Activated naive CD8-positive, alpha-beta T cell treated with anti-CD3 and anti-CD28 coated beads, Interleukin-2, amount 10 ng/mL, durations not matched to agents 7 days and 5 days (primary cell): ENCODE measurements at regions of chr5 and their contacts with region 1.

Region 1: DNA sequence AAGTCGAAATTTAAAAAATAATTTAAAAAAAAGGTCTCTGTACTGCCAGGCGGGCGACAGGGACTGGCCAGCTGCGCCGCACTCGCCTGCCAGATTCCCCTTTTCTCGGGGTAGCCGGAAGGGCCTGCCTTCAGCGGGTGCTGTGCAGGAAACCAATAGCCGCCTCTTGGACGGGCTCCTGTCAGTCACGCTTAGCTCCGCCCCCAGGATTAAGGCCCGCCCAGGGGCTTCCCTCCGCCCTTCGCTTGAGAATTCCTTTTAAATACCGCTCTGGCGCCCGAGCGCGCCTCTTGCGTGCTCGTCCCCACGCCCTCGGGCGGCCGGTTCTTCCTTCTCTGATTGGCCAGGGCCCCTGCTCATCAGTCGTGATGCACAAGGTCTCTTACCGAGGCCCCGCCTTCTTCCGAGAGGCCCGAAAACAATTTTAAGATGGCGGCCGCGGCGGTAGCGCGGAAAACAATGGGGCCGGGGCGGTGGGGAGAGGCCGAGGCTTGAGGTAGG is at the start of gene MAML1:
- DNase-seq: peak; percentile 98
- ATAC-seq: peak; percentile 97
- H3K4me3 Mint-ChIP-seq: peak within 1 kb of the TSS; percentile 95
- H3K27ac Mint-ChIP-seq: peak within 1 kb of the TSS; percentile 87
- H3K4me1 Mint-ChIP-seq: peaks cover 18% of the 10 kb centered on the region
- H3K27me3 Mint-ChIP-seq: no peaks in the 10 kb centered on the region
- total RNA-seq, gene MAML1: 38.5 TPM

Region 2: DNA sequence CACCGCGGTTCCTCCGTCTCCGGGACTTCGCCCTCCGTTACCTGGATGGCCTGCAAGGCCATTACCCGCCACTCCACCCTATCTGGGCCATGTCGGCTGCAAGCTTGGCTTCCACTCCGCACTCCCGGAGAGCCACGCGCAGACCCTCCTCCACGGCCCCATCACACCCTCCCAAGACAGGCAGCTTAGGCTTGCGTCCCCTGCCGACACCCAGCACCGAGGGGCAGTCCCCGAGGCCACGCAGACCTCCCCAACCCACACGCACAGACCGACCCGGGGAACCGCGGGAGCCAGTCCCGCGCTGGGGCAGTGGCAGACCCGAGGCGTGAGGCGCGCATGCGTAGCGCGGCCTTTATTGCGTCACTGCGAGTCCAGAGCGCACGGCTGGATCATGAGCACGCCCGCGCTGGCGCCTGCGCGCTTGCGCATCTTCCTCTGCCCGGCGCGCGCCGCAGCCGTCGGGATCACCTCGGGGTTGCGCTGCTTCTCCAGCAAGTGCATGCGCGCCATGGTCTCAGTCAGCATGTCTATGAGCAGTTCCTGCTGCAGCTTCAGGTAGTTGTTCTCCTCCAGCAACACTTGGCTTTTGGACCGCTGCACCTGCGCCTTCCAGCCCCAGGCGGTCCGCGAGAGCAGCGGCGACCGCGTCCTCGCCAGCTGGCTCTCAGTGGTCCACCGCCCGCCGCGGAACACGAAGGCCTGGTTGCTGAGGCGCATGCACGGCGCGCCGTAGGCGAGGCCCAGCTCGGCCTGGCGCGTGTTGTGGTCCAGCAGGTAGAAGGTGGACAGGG is 54.0 kb before region 1 on chr5:
- POLR2A ChIA-PET with region 1: interaction called, 23 read pairs
- DNase-seq: peak; percentile 95
- ATAC-seq: peak; percentile 93
- H3K4me3 Mint-ChIP-seq: peak overlapping the region; percentile 99
- H3K27ac Mint-ChIP-seq: peak overlapping the region; percentile 99
- H3K4me1 Mint-ChIP-seq: peaks cover 16% of the 10 kb centered on the region
- H3K27me3 Mint-ChIP-seq: no peaks in the 10 kb centered on the region

Region 3: DNA sequence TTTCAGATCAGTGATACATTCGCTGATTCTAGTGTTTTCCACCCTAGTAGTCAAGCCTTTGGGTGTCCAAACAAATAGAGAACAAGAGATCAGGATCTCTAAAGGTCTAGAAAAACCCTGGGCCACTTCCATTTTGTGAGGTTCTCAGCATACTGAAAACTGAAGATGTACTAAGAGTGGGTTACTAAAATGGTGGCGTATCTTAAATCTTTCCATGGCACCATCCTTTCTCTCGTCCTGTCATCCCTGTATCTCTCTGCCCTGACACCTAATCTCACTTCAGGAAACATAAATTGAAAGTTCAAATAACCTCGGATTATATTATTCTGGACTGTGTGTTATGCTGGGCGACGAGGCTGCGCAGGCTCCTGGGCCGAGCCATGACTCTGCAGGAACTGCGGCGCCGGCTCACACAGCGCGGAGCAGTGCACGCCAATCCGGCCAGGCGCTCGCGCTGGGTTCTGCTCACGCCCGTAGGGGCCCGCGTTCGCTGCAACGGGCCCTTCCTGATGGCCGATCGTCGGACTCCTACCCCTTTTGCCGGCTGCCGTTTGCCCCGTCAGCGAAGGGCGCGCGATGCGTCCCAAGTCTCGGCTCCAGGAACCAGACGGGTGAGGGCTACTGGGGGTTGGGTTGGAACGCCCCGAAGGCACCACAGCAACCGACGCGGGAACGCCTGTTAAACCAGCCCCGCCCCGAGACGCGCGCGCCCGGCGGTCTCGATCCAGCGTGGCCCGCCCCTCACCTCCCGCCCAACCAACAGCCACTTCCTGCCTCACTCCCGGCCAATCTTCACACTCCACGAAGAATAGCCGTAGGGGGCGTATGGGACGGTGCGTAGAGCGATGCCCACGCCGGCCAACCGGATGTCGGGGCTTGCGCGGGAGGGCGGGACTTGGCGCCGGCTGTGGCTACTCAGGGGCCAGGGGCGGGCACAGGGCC is 34.2 kb before region 1 on chr5:
- POLR2A ChIA-PET with region 1: interaction called, 21 read pairs
- DNase-seq: peak; percentile 98
- ATAC-seq: peak; percentile 92
- H3K4me3 Mint-ChIP-seq: peak overlapping the region; percentile 95
- H3K27ac Mint-ChIP-seq: peak overlapping the region; percentile 97
- H3K4me1 Mint-ChIP-seq: peaks cover 23% of the 10 kb centered on the region
- H3K27me3 Mint-ChIP-seq: no peaks in the 10 kb centered on the region

Region 4: GRCh38 chr5:179763215-179763945 is 30.9 kb after region 1 on chr5:
- POLR2A ChIA-PET with region 1: interaction called, 11 read pairs
- DNase-seq: no peak
- ATAC-seq: no peak
- H3K4me3 Mint-ChIP-seq: no peak overlapping the region
- H3K27ac Mint-ChIP-seq: no peak overlapping the region
- H3K4me1 Mint-ChIP-seq: peaks cover 38% of the 10 kb centered on the region
- H3K27me3 Mint-ChIP-seq: no peaks in the 10 kb centered on the region